CD14-positive monocyte (primary cell): ENCODE measurements at regions of chr1 and their contacts with region 1.

Region 1: GRCh38 chr1:27662707-27663393 is 9.1 kb downstream of the IFI6 start:
- DNase-seq: peak; percentile 83 to 88 (median 87)
- H3K4me3 ChIP-seq: peak overlapping the region in 1 of 3 experiments; percentile 60
- H3K4me3 Mint-ChIP-seq: peak overlapping the region; percentile 67 to 83
- H3K27ac ChIP-seq: peak overlapping the region; percentile 78 to 93
- H3K27ac Mint-ChIP-seq: peak overlapping the region; percentile 90 to 97 (median 95)
- H3K4me1 ChIP-seq: peaks cover 61 to 68% of the 10 kb centered on the region in 2 donors
- H3K4me1 Mint-ChIP-seq: peaks cover 69% of the 10 kb centered on the region
- H3K27me3 ChIP-seq: no peaks in the 10 kb centered on the region
- H3K27me3 Mint-ChIP-seq: no peaks in the 10 kb centered on the region
- CTCF ChIP-seq: peak; percentile 91

Region 2: DNA sequence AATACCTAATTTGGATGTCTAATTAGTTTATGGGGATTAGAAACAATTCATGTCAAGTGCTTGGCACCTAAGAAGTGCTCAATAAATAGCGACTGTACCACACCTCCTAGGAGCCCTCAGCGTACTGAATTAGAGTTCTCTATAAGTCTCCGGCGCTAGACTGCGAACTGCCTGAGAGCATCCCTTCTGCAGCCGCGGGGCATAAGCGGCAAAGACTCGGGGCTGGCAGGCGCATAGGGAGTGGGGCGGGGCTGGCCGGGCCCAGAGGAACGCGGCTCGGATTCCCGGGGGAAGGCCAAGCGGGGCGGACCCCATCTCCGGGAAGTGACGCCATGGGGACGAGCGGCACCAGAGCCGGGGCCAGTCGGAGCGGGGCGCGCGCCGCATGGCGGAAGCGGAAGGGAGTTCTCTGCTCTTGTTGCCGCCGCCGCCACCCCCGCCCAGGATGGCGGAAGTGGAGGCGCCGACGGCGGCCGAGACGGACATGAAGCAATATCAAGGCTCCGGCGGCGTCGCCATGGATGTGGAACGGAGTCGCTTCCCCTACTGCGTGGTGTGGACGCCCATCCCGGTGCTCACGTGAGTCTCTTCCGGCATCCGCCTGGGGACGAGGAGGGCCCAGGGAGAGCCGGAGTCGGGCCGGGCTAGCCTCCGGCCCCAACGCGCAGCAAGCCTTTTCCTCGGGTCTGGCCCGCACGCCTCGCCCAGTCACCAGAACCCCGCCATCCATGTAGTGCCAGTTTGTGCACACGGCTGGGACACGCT is 340.9 kb before region 1 on chr1 and contains the start of gene TMEM222:
- intact Hi-C with region 1: loop called in 1 of 2 experiments (anchors 10 kb)
- DNase-seq: peak; percentile 99
- H3K4me3 ChIP-seq: peak within 1 kb of the TSS; percentile 65 to 88 (median 87)
- H3K4me3 Mint-ChIP-seq: peak within 1 kb of the TSS; percentile 89 to 97
- H3K27ac ChIP-seq: peak within 1 kb of the TSS; percentile 89 to 95
- H3K27ac Mint-ChIP-seq: peak within 1 kb of the TSS; percentile 97 to 99 (median 98)
- H3K4me1 ChIP-seq: peaks cover 17 to 20% of the 10 kb centered on the region in 2 donors
- H3K4me1 Mint-ChIP-seq: peaks cover 30% of the 10 kb centered on the region
- H3K27me3 ChIP-seq: peaks cover 0 to 3% of the 10 kb centered on the region in 2 donors
- H3K27me3 Mint-ChIP-seq: peaks cover 5 to 8% (median 7%) of the 10 kb centered on the region in 3 donors
- CTCF ChIP-seq: no peak
- polyA plus RNA-seq, gene TMEM222: 23.2 to 29.0 (median 24.6) TPM

Region 3: GRCh38 chr1:27402349-27402754 is 260.5 kb before region 1 on chr1:
- intact Hi-C with region 1: loop called in 1 of 2 experiments (anchors 10 kb)
- DNase-seq: peak; percentile 50 to 64 (median 56)
- H3K4me3 ChIP-seq: no peak overlapping the region
- H3K4me3 Mint-ChIP-seq: no peak overlapping the region
- H3K27ac ChIP-seq: peak overlapping the region in 1 of 2 donors; percentile 33
- H3K27ac Mint-ChIP-seq: peak overlapping the region in 3 of 7 donors; percentile 30 to 77 (median 69)
- H3K4me1 ChIP-seq: peaks cover 26 to 32% of the 10 kb centered on the region in 2 donors
- H3K4me1 Mint-ChIP-seq: peaks cover 38% of the 10 kb centered on the region
- H3K27me3 ChIP-seq: no peaks in the 10 kb centered on the region
- H3K27me3 Mint-ChIP-seq: peaks cover 0 to 5% (median 2%) of the 10 kb centered on the region in 3 donors
- CTCF ChIP-seq: peak; percentile 66

Region 4: GRCh38 chr1:27416387-27417111 is 246.3 kb before region 1 on chr1:
- intact Hi-C with region 1: loop called in 1 of 2 experiments (anchors 5 kb)
- DNase-seq: peak; percentile 57 to 67 (median 58)
- H3K4me3 ChIP-seq: no peak overlapping the region
- H3K4me3 Mint-ChIP-seq: no peak overlapping the region
- H3K27ac ChIP-seq: peak overlapping the region in 1 of 2 donors; percentile 24
- H3K27ac Mint-ChIP-seq: peak overlapping the region in 4 of 7 donors; percentile 2 to 56 (median 35)
- H3K4me1 ChIP-seq: peaks cover 6 to 12% of the 10 kb centered on the region in 2 donors
- H3K4me1 Mint-ChIP-seq: peaks cover 17% of the 10 kb centered on the region
- H3K27me3 ChIP-seq: no peaks in the 10 kb centered on the region
- H3K27me3 Mint-ChIP-seq: no peaks in the 10 kb centered on the region
- CTCF ChIP-seq: peak; percentile 70

Region 5: GRCh38 chr1:27556781-27557595 is 105.9 kb before region 1 on chr1:
- intact Hi-C with region 1: loop called (anchors 1 to 5 kb)
- DNase-seq: peak; percentile 81 to 83 (median 81)
- H3K4me3 ChIP-seq: peak overlapping the region; percentile 1 to 74 (median 29)
- H3K4me3 Mint-ChIP-seq: peak overlapping the region; percentile 61 to 74
- H3K27ac ChIP-seq: peak overlapping the region; percentile 14 to 17
- H3K27ac Mint-ChIP-seq: peak overlapping the region; percentile 73 to 90 (median 84)
- H3K4me1 ChIP-seq: peaks cover 21 to 22% of the 10 kb centered on the region in 2 donors
- H3K4me1 Mint-ChIP-seq: peaks cover 26% of the 10 kb centered on the region
- H3K27me3 ChIP-seq: no peaks in the 10 kb centered on the region
- H3K27me3 Mint-ChIP-seq: peaks cover 0 to 6% (median 4%) of the 10 kb centered on the region in 3 donors
- CTCF ChIP-seq: peak; percentile 99

Region 6: GRCh38 chr1:27609210-27609555 is 53.7 kb before region 1 on chr1:
- intact Hi-C with region 1: loop called (anchors 2 kb)
- DNase-seq: peak; percentile 61 to 84 (median 63)
- H3K4me3 ChIP-seq: no peak overlapping the region
- H3K4me3 Mint-ChIP-seq: no peak overlapping the region
- H3K27ac ChIP-seq: peak overlapping the region; percentile 18 to 72
- H3K27ac Mint-ChIP-seq: no peak overlapping the region
- H3K4me1 ChIP-seq: peaks cover 36 to 63% of the 10 kb centered on the region in 2 donors
- H3K4me1 Mint-ChIP-seq: peaks cover 29% of the 10 kb centered on the region
- H3K27me3 ChIP-seq: no peaks in the 10 kb centered on the region
- H3K27me3 Mint-ChIP-seq: peaks cover 0 to 3% (median 2%) of the 10 kb centered on the region in 3 donors
- CTCF ChIP-seq: no peak

Region 7: DNA sequence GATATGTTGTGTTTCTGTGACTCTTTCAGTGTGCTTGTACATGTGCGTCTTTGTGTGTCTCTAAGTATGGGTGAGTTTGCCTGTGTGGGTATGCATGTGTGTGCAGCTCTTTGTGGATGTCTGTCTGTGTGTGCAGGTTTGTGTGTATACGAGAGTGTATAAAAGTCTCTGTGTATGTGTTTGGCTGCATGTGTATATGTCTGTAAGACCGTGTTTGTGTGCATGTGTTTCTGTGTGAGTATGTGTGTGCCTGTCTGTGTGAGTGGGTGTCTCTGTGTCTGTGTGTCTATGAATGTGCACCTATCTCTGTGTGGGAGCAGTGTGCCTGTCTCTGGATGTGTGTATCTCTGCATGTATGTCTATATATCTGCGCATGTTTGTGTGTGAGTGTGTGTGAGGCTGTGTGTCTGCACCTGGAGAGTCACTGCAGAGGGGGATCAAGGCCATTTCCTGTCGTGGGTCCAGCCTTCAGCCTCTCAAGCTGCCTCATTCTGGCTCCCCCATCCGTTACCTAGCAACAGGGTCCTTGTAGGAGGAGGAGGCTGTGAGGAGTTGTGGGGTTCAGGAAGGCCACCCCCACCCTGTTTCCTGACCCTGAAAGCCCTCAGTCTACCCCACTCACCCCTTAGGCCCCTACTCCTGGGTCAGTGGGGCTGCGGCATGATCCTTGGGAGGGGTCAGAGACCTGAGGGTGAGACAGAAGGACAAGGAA is 38.2 kb before region 1 on chr1:
- intact Hi-C with region 1: loop called (anchors 5 kb)
- DNase-seq: no peak
- H3K4me3 ChIP-seq: peak overlapping the region; percentile 42 to 75 (median 52)
- H3K4me3 Mint-ChIP-seq: no peak overlapping the region
- H3K27ac ChIP-seq: peak overlapping the region; percentile 98 to 99
- H3K27ac Mint-ChIP-seq: no peak overlapping the region
- H3K4me1 ChIP-seq: peaks cover 97 to 100% of the 10 kb centered on the region in 2 donors
- H3K4me1 Mint-ChIP-seq: peaks cover 46% of the 10 kb centered on the region
- H3K27me3 ChIP-seq: no peaks in the 10 kb centered on the region
- H3K27me3 Mint-ChIP-seq: peaks cover 0 to 4% (median 2%) of the 10 kb centered on the region in 3 donors
- CTCF ChIP-seq: no peak